Activated B cell treated with CpG ODN at 0.5 μM for 24 hours (primary cell): ENCODE measurements at regions of chr1 and their contacts with region 1.

Region 1: DNA sequence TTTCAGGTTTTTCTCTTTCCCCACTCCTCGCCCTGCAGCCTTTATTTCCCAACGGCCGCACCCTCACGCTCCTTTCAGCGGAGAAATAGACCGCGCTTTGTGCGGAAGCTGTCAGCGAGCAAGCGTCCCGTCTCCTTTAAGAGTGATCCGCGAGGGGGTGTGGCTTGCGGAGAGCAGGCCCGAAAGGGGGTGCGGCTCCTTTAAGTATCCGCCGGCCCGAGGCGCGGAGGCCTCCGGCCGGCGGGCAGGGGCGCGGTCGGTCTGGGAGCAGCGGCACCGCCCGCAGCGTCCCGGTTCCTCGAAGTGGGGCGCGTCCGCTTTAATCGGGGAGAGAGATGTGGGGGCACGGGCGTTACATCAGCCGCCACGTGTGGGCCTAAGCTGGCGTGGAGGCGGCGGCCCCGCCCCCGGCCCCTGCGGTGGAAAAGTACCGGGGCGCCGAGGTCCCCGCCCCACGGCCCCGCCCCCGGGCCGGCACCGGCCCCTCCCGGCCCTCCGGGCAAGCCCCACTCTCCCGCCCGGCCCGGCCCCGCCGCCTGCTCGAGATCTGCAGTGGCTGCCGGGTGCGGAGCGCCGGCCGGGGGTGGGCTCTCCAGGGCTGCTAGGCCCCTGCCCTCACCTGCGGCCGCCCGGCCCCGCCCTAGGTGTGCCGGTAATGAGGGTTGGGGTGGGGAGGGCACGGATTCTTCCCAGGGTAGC is 1.2 kb downstream of the SLC6A9 start:
- DNase-seq: peak; percentile 93
- ATAC-seq: peak; percentile 76
- H3K4me3 Mint-ChIP-seq: peak overlapping the region; percentile 95
- H3K27ac Mint-ChIP-seq: peak overlapping the region; percentile 97
- H3K4me1 Mint-ChIP-seq: peaks cover 32% of the 10 kb centered on the region
- H3K27me3 Mint-ChIP-seq: no peaks in the 10 kb centered on the region
- CTCF ChIP-seq: no peak

Region 2: GRCh38 chr1:43706598-43707495 is 323.2 kb before region 1 on chr1:
- CTCF ChIA-PET with region 1: no interaction called
- POLR2A ChIA-PET with region 1: no interaction called
- intact Hi-C with region 1: loop called (anchors 1 kb)
- DNase-seq: no peak
- ATAC-seq: peak; percentile 97
- H3K4me3 Mint-ChIP-seq: peak overlapping the region; percentile 86
- H3K27ac Mint-ChIP-seq: peak overlapping the region; percentile 63
- H3K4me1 Mint-ChIP-seq: peaks cover 33% of the 10 kb centered on the region
- H3K27me3 Mint-ChIP-seq: no peaks in the 10 kb centered on the region
- CTCF ChIP-seq: no peak

Region 3: DNA sequence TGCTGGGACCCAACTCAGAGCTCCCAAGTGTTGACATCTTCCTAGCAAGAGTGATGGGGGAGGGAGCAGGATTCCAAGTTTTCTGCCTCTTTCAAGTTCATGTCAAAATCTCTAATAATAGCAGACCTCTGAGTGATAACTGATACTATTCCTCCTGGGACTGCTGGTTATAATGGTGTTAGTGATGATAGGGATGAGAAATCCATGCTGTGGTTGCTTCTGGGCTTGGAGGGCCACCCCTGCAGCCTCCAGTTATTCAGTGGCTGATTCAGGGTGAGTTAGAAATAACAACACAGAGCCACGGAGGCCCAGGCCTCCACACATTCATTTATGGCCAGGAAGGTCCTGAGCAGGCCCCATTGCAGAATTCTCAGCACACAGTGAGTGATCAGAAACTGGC is 137.0 kb before region 1 on chr1:
- CTCF ChIA-PET with region 1: no interaction called
- POLR2A ChIA-PET with region 1: no interaction called
- intact Hi-C with region 1: no loop called
- DNase-seq: no peak
- ATAC-seq: no peak
- H3K4me3 Mint-ChIP-seq: no peak overlapping the region
- H3K27ac Mint-ChIP-seq: no peak overlapping the region
- H3K4me1 Mint-ChIP-seq: no peaks in the 10 kb centered on the region
- H3K27me3 Mint-ChIP-seq: no peaks in the 10 kb centered on the region
- CTCF ChIP-seq: no peak

Region 4: GRCh38 chr1:43934101-43934985 is 95.7 kb before region 1 on chr1:
- CTCF ChIA-PET with region 1: no interaction called
- POLR2A ChIA-PET with region 1: interaction called, 3 read pairs
- intact Hi-C with region 1: loop called (anchors 5 kb)
- DNase-seq: peak; percentile 37
- ATAC-seq: peak; percentile 67
- H3K4me3 Mint-ChIP-seq: peak overlapping the region; percentile 62
- H3K27ac Mint-ChIP-seq: no peak overlapping the region
- H3K4me1 Mint-ChIP-seq: peaks cover 19% of the 10 kb centered on the region
- H3K27me3 Mint-ChIP-seq: peaks cover 22% of the 10 kb centered on the region
- CTCF ChIP-seq: no peak

Region 5: DNA sequence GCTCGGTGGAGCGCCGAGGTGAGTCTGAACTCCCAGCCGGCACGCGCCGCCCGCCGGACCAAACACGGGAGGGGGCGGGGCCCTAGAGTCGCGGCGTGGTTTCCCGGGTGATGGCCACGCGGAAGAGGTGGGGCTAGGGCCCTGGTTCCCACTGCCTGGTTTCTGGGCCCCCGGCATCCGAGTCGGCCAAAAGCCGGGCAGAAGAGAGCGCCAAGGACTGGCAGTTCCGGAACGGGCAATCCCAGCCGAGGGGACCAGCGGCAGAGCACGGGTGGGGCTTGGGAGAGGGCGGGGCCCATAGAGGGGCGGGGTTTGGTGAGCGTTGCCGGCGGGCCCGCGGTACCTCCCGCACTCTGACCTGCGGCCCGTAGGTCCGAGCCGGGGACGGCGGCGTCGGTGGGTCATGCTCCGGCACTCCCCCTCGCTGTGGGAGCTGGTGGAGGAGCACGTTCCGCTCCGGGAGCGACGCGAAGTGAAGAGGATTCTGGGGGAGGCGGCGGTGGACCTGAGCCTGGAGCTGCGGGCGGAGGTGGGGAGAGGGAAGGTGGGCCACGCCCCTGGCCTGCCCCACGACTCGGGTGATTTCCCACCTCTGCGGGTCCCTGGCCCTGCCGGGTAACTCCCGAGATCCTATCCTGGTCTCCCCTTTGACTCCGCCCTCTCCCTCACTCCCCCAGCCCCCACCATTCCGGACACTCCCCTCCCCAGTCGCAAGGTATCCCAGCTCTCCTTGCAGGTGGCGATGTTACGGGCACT is 38.4 kb before region 1 on chr1 and contains the start of gene CCDC24:
- CTCF ChIA-PET with region 1: no interaction called
- POLR2A ChIA-PET with region 1: interaction called, 6 read pairs
- intact Hi-C with region 1: loop called (anchors 1 kb)
- DNase-seq: peak; percentile 82
- ATAC-seq: peak; percentile 86
- H3K4me3 Mint-ChIP-seq: peak within 1 kb of the TSS; percentile 96
- H3K27ac Mint-ChIP-seq: peak within 1 kb of the TSS; percentile 88
- H3K4me1 Mint-ChIP-seq: peaks cover 36% of the 10 kb centered on the region
- H3K27me3 Mint-ChIP-seq: no peaks in the 10 kb centered on the region
- CTCF ChIP-seq: no peak
- total RNA-seq, gene CCDC24: 8.1 and 15.1 TPM in 2 replicates